Calu3 (cell line): ENCODE measurements at regions of chr1 and their contacts with region 1.

Region 1: GRCh38 chr1:94608142-94608851 is 66.7 kb upstream of the F3 start:
- DNase-seq: peak; percentile 66
- H3K4me3 Mint-ChIP-seq: peak overlapping the region; percentile 25
- H3K27ac Mint-ChIP-seq: peak overlapping the region; percentile 87
- H3K4me1 Mint-ChIP-seq: peaks cover 71% of the 10 kb centered on the region
- H3K27me3 Mint-ChIP-seq: no peaks in the 10 kb centered on the region
- CTCF ChIP-seq: no peak

Region 2: GRCh38 chr1:94641990-94642389 is 33.7 kb after region 1 on chr1:
- CTCF ChIA-PET with region 1: no interaction called
- intact Hi-C with region 1: loop called (anchors 5 kb)
- DNase-seq: peak; percentile 75
- H3K4me3 Mint-ChIP-seq: no peak overlapping the region
- H3K27ac Mint-ChIP-seq: no peak overlapping the region
- H3K4me1 Mint-ChIP-seq: peaks cover 31% of the 10 kb centered on the region
- H3K27me3 Mint-ChIP-seq: no peaks in the 10 kb centered on the region
- CTCF ChIP-seq: no peak